ENCODE measurements at regions of chrX and their contacts with region 1.

Region 1: DNA sequence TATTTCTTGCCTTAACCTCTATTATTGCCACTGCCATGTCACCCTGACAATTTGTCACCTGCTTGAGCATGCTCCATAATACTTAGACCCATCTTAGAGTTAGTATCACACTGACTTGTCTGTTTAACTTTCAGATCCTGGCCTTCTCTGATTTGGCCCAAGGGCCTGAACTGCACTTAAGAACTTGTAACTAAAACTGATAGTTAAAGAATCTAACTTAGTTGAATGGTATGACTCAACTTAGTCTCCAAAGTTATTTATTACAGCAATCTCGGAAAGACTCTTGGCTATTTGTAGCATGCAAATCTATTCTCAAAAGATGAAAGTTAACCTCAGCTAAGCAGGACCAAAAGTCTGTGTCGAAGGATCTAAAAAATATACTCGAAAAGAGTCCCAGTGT is 72.3 kb downstream of the IGSF1 start:
- DNase-seq: no peak
- H3K4me3 ChIP-seq: no peak overlapping the region
- H3K4me1 ChIP-seq: no peaks in the 10 kb centered on the region
- H3K27me3 ChIP-seq: peaks cover 6% of the 10 kb centered on the region; the same call in 1 of the 2 replicates

Region 2: DNA sequence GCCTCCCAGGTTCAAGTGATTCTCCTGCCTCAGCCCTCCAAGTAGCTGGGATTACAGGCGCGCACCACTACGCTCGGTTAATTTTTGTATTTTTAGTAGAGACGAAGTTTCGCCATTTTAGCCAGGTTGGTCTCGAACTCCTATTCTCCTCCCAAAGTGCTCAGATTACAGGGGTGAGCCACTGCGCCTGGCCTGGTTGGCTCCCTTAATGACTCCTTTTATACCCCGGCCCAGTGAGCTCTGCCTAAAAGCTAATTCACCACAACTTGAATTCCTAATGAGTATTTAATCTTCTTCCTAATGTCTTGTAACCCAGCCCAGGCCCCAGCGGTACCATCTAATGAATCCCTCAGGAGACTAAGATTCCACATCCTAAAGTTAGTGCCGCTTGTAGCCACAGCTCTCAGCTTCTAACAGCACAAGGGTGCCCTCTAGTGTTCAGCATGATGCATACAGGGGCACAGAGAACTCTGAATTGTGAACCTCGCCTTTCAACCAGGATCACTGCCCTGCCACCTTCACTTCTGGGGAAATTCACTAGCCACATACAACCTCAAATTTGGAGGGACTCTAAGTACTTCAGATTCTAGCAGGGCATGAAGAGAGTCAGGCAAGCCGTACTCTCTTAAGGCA is 416.6 kb after region 1 on chrX:
- in situ Hi-C with region 1: loop called (anchors 25 kb)
- DNase-seq: peak; percentile 63 to 81
- H3K4me3 ChIP-seq: no peak overlapping the region
- H3K4me1 ChIP-seq: no peaks in the 10 kb centered on the region
- H3K27me3 ChIP-seq: peaks cover 2% of the 10 kb centered on the region; the same call in 1 of the 2 replicates